ENCODE measurements at regions of chr4 and their contacts with region 1.

Region 1: DNA sequence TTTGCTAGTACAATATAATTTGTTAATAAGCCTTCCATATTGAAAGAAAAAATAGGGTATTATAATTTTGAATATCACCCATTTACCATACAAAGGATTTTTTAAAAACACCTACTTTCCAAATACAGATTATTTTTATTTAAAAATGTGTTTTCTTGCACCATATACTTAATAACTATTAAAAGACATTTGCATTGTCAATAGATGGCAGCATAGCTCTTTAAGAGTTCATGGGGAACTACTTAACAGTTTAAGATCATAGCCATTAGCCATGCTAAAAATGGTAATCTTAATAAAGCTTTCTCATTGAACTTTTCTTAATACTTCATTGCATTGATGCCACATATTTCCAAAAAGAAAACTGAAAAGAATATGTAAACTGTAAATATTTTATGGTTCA is 1995.9 kb downstream of the C4orf33 start:
- DNase-seq: no peak
- H3K4me3 ChIP-seq: no peak overlapping the region
- H3K27ac ChIP-seq: no peak overlapping the region
- H3K27me3 ChIP-seq: no peaks in the 10 kb centered on the region
- CTCF ChIP-seq: peak in 55 of 56 donors; percentile 23 to 82 (median 55)

Region 2: DNA sequence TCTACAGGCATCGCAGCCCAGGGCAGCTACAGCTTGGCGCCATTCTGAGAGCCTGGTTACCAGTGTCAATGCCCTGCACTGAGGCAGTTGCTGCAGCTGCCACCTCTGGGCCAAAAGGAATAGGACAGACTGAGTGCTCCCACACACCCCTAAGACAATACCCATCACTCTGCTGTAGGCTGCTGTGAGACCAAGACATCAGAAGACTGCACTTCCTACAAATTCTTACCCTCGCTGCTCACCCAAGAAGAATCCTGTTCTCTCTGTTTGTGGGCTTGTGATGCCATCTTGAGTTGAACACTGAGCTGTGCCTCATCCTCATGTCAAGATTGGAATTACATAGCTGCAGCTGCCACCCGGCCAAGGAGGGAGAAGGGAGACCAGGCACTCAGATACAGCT is 210.2 kb after region 1 on chr4:
- intact Hi-C with region 1: loop called (anchors 2 to 10 kb)
- DNase-seq: no peak
- H3K4me3 ChIP-seq: no peak overlapping the region
- H3K27ac ChIP-seq: no peak overlapping the region
- H3K27me3 ChIP-seq: no peaks in the 10 kb centered on the region
- CTCF ChIP-seq: peak in 31 of 56 donors; percentile 9 to 61 (median 31)